ENCODE measurements at regions of chr10 and their contacts with region 1.

Region 1: DNA sequence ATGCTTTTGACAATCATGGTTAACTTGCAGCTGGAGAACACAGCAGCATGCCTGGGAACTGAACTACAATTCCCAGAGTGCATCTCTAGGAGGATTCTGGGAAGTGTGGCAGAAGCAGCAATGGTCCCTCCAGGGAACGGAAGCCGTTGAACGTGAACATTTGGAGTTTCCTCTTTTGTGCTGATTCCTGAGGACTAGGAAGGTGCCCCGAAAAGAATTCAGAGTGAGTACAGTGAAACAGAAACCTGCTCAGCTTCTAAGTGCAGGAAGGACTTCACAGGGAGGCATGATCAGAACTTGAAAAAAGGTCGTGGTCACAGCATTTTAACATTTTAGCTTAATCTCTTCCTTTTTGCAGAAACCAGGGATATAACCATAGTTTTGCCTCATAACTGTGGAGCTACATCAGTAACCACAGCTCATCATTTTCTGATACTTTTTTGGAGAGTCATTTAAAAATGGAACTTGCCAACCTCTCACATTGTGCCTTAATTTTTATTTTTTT is at the start of gene NUDT13:
- DNase-seq: peak; percentile 26
- H3K4me3 Mint-ChIP-seq: peak within 1 kb of the TSS; percentile 87
- H3K27ac Mint-ChIP-seq: peak within 1 kb of the TSS; percentile 90
- H3K4me1 Mint-ChIP-seq: peaks cover 20% of the 10 kb centered on the region
- H3K27me3 Mint-ChIP-seq: no peaks in the 10 kb centered on the region
- total RNA-seq, gene NUDT13: 0.81 and 0.83 TPM in 2 replicates

Region 2: GRCh38 chr10:72904806-72905205 is 205.6 kb before region 1 on chr10:
- intact Hi-C with region 1: no loop called
- DNase-seq: no peak
- H3K4me3 Mint-ChIP-seq: no peak overlapping the region
- H3K27ac Mint-ChIP-seq: peak overlapping the region; percentile 19
- H3K4me1 Mint-ChIP-seq: no peaks in the 10 kb centered on the region
- H3K27me3 Mint-ChIP-seq: peaks cover 5% of the 10 kb centered on the region

Region 3: GRCh38 chr10:73246783-73247508 is 136.5 kb after region 1 on chr10 and contains the start of gene DNAJC9:
- intact Hi-C with region 1: loop called (anchors 5 kb)
- DNase-seq: peak; percentile 96
- H3K4me3 Mint-ChIP-seq: peak within 1 kb of the TSS; percentile 97
- H3K27ac Mint-ChIP-seq: peak within 1 kb of the TSS; percentile 95
- H3K4me1 Mint-ChIP-seq: peaks cover 67% of the 10 kb centered on the region
- H3K27me3 Mint-ChIP-seq: no peaks in the 10 kb centered on the region
- total RNA-seq, gene DNAJC9: 55.4 and 55.5 TPM in 2 replicates

Measured in activated T-helper 1 cell treated with anti-CD3 and anti-CD28 coated beads, Interleukin-12 subunit alpha, Interleukin-12 subunit beta, Interleukin-2, Interleukin-4 antibody, amounts not matched to agents 30 ng/mL and 10 ng/mL and 1 ng/mL, durations not matched to agents 14 hours and 24 hours and 36 hours (primary cell).